Thyroid gland (tissue), 4 donors: ENCODE measurements at regions of chr1 and their contacts with region 1.

Region 1: GRCh38 chr1:33367485-33368405 is 46.8 kb upstream of the A3GALT2 start:
- DNase-seq: peak; percentile 86 to 91
- H3K4me3 ChIP-seq: no peak overlapping the region
- H3K27ac ChIP-seq: no peak overlapping the region
- H3K4me1 ChIP-seq: peaks cover 35 to 36% of the 10 kb centered on the region in 2 donors
- H3K27me3 ChIP-seq: no peaks in the 10 kb centered on the region
- CTCF ChIP-seq: peak; percentile 95 to 98 (median 96)
- POLR2A ChIP-seq: no peak

Region 2: DNA sequence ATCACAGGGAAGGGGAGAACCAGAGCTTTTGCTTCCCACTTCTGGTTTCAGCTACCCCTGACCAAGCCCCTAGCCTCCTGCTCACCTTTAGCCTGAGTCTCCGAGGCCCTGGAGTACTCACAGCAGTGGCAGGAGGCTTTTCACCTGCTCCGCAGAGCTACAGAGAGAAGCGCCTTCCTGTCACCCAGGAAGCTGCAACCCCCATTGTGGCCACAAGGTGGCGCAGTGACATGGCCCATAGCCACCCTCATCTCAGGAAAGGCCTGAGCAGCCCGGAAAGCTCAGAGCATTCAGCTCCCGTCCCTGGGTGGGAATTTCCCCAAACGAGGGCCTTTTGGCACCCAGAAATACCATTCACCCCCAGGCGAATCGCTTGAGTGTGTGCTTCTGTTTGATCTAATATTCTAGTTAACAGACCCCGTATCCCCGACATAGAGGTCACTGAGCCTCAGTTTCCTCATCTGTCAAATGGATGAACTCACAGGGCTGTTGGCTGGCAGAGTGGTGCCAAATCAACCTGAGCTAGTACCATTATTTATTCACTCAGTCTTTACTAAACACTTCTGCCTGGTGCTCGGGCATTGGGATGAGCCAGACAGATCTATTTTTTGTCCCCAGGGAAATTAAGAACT is 72.2 kb before region 1 on chr1:
- intact Hi-C with region 1: loop called (anchors 2 kb)
- DNase-seq: peak; percentile 91
- H3K4me3 ChIP-seq: no peak overlapping the region
- H3K27ac ChIP-seq: peak overlapping the region in 1 of 3 donors; percentile 45
- H3K4me1 ChIP-seq: peaks cover 8 to 9% of the 10 kb centered on the region in 2 donors
- H3K27me3 ChIP-seq: no peaks in the 10 kb centered on the region
- CTCF ChIP-seq: peak; percentile 93 to 98 (median 97)
- POLR2A ChIP-seq: no peak

Region 3: DNA sequence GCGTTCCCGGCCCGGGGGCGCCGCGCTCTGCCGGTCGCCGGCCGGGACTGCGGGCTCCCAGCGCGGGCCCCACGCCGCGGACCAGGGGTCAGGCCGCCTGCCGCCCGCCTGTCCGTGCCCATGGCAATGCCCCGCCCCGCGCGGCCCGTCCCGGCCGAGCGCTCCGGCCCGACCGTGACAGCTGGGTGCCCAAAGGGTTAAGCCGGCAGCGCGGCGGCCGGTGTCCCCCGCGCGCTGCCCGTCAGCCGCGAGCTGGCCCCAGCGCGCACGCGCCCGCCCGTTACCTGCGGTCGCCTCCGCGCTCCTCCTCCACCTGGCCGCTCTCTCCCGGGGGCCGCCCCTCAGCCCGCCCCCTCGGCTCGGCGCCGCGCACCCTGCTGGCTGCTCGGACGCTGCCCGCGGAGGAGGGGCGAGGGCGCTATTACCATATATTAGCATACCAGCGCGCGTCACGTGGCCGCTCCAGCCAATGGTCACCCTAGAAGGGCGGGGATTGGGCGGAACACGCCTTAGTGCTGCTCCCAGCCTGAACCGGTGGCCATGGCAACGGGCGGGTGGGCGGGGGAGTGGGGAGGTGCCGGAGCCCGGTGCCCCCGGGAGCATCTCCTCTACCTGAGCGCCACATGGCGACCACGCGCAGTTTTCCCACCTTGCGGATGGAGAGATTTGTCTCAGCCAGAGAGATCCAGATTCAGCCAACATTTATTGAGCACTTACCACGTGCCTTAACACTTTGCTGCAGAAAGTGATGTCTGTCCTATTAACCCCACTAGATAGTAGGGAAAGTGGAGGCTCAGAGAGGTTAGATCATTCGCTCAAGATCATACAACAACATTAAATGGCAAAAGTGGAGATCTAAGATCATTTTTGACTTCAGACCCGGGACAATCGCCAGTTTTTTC is 63.2 kb after region 1 on chr1 and contains the start of gene PHC2:
- intact Hi-C with region 1: loop called (anchors 5 kb)
- DNase-seq: peak; percentile 99 to 100
- H3K4me3 ChIP-seq: peak within 1 kb of the TSS; percentile 47 to 75 (median 57)
- H3K27ac ChIP-seq: peak within 1 kb of the TSS in 1 of 3 donors; percentile 32
- H3K4me1 ChIP-seq: peaks cover 7 to 11% of the 10 kb centered on the region in 2 donors
- H3K27me3 ChIP-seq: no peaks in the 10 kb centered on the region
- CTCF ChIP-seq: peak in 3 of 6 experiments; percentile 24 to 40 (median 38)
- POLR2A ChIP-seq: peak in 1 of 2 donors; percentile 83
- total RNA-seq, gene PHC2: 86.8 to 150 (median 113) TPM

Region 4: GRCh38 chr1:33466159-33466558 is 98.4 kb after region 1 on chr1:
- intact Hi-C with region 1: loop called (anchors 5 kb)
- DNase-seq: no peak
- H3K4me3 ChIP-seq: no peak overlapping the region
- H3K27ac ChIP-seq: no peak overlapping the region
- H3K4me1 ChIP-seq: peaks cover 5 to 8% of the 10 kb centered on the region in 2 donors
- H3K27me3 ChIP-seq: no peaks in the 10 kb centered on the region
- CTCF ChIP-seq: no peak
- POLR2A ChIP-seq: no peak

Region 5: DNA sequence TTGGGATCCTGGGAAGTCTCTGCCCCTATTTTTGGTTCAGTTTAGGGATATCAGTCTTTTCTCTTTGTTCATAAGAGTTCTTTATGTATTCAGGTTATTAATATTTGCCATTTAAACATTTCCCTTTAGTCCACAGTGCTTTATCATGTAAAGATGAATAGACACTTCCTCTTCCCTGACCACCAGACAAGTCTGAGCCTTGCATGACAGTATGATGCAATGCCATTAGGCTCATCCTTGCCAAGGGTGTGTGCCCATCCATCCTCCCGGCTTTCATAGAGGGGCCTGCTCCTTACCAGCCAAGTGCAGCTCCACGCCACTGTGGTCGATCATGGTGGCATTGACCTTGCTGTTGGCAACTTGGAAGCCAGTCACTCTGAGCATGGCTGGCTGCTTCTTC is 156.8 kb after region 1 on chr1:
- intact Hi-C with region 1: no loop called
- DNase-seq: no peak
- H3K4me3 ChIP-seq: no peak overlapping the region
- H3K27ac ChIP-seq: no peak overlapping the region
- H3K4me1 ChIP-seq: no peaks in the 10 kb centered on the region
- H3K27me3 ChIP-seq: no peaks in the 10 kb centered on the region
- CTCF ChIP-seq: no peak
- POLR2A ChIP-seq: no peak

Region 6: GRCh38 chr1:33575324-33575879 is 207.7 kb after region 1 on chr1:
- intact Hi-C with region 1: no loop called
- DNase-seq: peak in 1 of 2 donors; percentile 3
- H3K4me3 ChIP-seq: no peak overlapping the region
- H3K27ac ChIP-seq: peak overlapping the region; percentile 2 to 38 (median 21)
- H3K4me1 ChIP-seq: no peaks in the 10 kb centered on the region
- H3K27me3 ChIP-seq: no peaks in the 10 kb centered on the region
- CTCF ChIP-seq: no peak
- POLR2A ChIP-seq: no peak